Naive thymus-derived CD4-positive, alpha-beta T cell (primary cell): ENCODE measurements at regions of chr20 and their contacts with region 1.

Region 1: DNA sequence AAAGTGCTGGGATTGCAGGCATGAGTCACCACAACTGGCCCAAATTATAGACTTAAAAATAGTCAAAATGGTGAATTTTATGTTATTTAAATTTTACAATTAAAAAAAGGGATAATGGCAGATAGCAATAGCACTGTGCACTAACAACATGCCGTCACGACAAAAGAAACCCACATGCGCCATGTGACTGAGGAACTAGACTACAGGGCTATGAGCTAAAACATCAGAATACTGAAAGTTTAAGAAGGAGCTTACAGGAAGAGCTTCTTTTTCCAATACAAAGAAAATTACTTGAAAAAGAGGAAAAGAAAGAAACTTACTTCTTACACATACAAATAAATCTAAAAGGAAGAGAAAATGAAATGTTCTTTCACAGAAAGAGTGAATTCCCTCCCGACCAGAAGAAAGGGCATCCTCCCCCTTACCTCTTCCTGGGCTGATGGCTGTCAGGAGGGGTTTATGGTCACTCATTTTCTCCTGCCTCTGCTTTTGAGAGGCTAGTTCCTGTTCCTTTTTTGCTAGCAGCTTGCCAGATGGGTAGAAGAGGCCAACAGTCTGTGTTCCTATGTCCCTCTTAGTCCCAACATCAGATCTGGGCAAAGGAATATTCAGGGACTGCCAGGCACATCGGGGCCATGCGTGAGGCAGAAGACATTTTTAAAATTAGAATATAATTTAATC is 54.5 kb downstream of the DZANK1 start:
- DNase-seq: no peak
- ATAC-seq: peak; percentile 33
- H3K4me3 ChIP-seq: no peak overlapping the region
- H3K4me3 Mint-ChIP-seq: no peak overlapping the region
- H3K27ac ChIP-seq: no peak overlapping the region
- H3K27ac Mint-ChIP-seq: no peak overlapping the region
- H3K4me1 ChIP-seq: no peaks in the 10 kb centered on the region
- H3K4me1 Mint-ChIP-seq: peaks cover 0 to 7% (median 3%) of the 10 kb centered on the region in 7 donors
- H3K27me3 ChIP-seq: no peaks in the 10 kb centered on the region
- H3K27me3 Mint-ChIP-seq: no peaks in the 10 kb centered on the region

Region 2: DNA sequence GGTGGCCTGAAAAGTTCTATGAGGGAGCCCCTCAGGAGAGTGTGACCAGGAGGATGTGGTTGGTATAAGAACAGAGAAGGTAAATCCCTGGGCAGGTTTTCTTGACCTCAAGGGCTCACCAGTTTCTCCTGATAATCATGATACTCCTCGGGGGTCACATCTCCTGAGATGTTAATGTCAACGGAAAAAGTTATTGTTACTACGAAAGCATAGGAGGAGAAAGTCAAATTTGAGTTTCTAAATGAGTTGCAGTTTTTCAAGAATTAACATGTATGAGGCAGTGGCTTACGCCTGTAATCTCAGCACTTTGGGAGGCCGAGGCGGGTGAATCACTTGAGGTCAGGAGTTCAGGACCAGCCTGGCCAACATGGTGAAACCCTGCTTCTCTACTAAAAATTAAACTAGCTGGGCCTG is 420.1 kb before region 1 on chr20:
- CTCF ChIA-PET with region 1: no interaction called
- POLR2A ChIA-PET with region 1: no interaction called
- intact Hi-C with region 1: no loop called
- DNase-seq: peak in 1 of 9 donors; percentile 53
- ATAC-seq: no peak
- H3K4me3 ChIP-seq: no peak overlapping the region
- H3K4me3 Mint-ChIP-seq: peak overlapping the region in 1 of 10 donors; percentile 82
- H3K27ac ChIP-seq: no peak overlapping the region
- H3K27ac Mint-ChIP-seq: peak overlapping the region in 1 of 9 donors; percentile 93
- H3K4me1 ChIP-seq: peaks cover 5 to 8% of the 10 kb centered on the region in 2 donors
- H3K4me1 Mint-ChIP-seq: peaks cover 4 to 59% (median 23%) of the 10 kb centered on the region in 7 donors
- H3K27me3 ChIP-seq: no peaks in the 10 kb centered on the region
- H3K27me3 Mint-ChIP-seq: peaks cover 0 to 7% (median 0%) of the 10 kb centered on the region in 5 donors

Region 3: DNA sequence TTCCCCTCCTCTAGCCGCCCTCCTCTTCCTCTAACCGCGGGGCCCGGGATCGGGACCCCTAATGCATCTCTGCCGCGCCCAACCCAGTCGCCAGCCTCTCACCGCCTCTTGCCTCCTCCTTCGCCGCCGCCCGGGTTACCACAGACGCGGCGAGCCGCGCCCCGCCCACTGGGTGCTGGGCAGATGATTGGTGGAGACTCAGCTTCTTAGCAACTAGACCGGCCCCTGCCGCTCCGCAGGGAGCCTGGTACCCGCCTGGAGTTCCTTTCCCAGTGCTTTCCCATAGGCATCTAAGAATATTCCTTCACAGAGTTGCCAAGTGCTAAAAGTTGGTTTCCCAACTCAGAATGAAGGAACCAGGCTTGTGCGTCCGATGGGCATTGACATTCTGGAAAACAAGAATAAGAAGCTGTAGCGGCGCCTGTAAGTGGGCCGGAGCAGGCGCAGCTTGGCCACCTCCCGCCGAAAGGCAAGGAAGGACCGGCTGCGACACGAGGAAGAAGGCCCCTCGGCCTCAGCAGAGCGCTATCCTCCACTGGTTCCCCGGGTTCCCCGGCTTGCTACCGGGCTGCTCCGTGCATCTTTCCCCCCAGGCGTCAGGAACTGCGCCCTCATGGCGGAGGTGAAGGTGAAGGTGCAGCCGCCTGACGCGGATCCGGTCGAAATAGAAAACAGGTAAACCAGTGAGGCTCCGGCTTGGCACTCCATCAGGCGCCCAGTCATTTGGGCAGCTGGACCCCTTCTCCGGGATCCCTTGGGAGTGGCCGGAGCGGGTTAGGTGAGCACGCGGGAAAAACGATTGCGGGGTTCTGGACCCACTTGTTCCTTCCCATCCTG is 54.8 kb after region 1 on chr20 and contains the starts of genes DZANK1 and POLR3F:
- CTCF ChIA-PET with region 1: no interaction called
- POLR2A ChIA-PET with region 1: no interaction called
- intact Hi-C with region 1: loop called (anchors 1 to 2 kb)
- DNase-seq: peak; percentile 85 to 93 (median 92)
- ATAC-seq: peak; percentile 97
- H3K4me3 ChIP-seq: peak within 1 kb of the TSS; percentile 93
- H3K4me3 Mint-ChIP-seq: peak within 1 kb of the TSS; percentile 89 to 99 (median 97)
- H3K27ac ChIP-seq: peak within 1 kb of the TSS; percentile 77
- H3K27ac Mint-ChIP-seq: peak within 1 kb of the TSS; percentile 93 to 99 (median 98)
- H3K4me1 ChIP-seq: peaks cover 7 to 14% of the 10 kb centered on the region in 2 donors
- H3K4me1 Mint-ChIP-seq: peaks cover 25 to 44% (median 37%) of the 10 kb centered on the region in 7 donors
- H3K27me3 ChIP-seq: no peaks in the 10 kb centered on the region
- H3K27me3 Mint-ChIP-seq: no peaks in the 10 kb centered on the region
- total RNA-seq, gene DZANK1: 1.2 to 3.5 (median 2.9) TPM
- total RNA-seq, gene POLR3F: 5.0 to 13.5 (median 11.5) TPM

Region 4: GRCh38 chr20:18587665-18588573 is 175.6 kb after region 1 on chr20 and contains the start of gene DTD1:
- CTCF ChIA-PET with region 1: no interaction called
- POLR2A ChIA-PET with region 1: no interaction called
- intact Hi-C with region 1: loop called (anchors 2 to 5 kb)
- DNase-seq: peak; percentile 29 to 93 (median 53)
- ATAC-seq: peak; percentile 92
- H3K4me3 ChIP-seq: peak within 1 kb of the TSS; percentile 68
- H3K4me3 Mint-ChIP-seq: peak within 1 kb of the TSS; percentile 83 to 99 (median 91)
- H3K27ac ChIP-seq: peak within 1 kb of the TSS; percentile 74
- H3K27ac Mint-ChIP-seq: peak within 1 kb of the TSS; percentile 80 to 94 (median 91)
- H3K4me1 ChIP-seq: peaks cover 0 to 4% of the 10 kb centered on the region in 2 donors
- H3K4me1 Mint-ChIP-seq: peaks cover 16 to 39% (median 27%) of the 10 kb centered on the region in 7 donors
- H3K27me3 ChIP-seq: no peaks in the 10 kb centered on the region
- H3K27me3 Mint-ChIP-seq: peaks cover 0 to 11% (median 9%) of the 10 kb centered on the region in 5 donors
- total RNA-seq, gene DTD1: 12.7 to 24.4 (median 16.6) TPM

Region 5: DNA sequence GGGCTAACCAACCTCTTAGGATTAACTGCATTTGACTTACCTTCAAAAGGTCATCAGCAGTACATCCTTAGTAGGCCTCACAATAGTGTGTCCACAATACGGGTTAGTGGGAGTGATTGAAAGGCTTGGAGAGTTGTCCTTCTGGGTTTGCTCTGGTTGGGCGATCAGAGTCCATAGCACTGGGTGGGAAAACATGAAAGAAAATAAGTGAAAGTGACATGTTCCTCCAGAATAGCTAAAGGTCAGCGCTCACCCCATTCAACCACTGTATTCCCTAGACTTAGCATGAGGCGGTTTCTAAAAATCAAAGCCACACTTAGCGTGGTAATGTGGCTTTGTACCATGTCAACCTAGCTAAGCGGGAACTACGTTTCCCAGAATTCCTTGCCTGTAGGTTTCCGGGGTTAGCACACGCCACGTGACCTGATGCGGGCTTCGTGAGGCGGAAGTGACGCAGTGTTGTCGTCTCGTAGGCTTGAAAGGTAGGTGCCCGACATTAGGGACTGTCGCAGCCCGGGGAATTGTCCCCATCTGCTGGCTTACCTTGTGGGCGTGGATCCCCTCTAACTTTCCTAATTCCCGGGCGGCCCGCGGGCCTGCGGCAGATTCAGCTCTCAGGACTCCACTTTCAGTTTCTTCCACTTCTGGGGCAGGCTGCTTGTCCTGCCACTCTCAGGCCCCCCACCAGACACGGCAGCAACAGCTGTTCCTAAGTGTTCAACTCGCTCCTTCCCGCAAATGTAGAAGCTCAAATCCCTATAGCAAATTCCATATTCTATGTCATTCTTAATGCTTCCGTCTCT is 381.5 kb after region 1 on chr20:
- CTCF ChIA-PET with region 1: no interaction called
- POLR2A ChIA-PET with region 1: no interaction called
- intact Hi-C with region 1: loop called (anchors 5 kb)
- DNase-seq: peak; percentile 62 to 94 (median 87)
- ATAC-seq: peak; percentile 99
- H3K4me3 ChIP-seq: peak overlapping the region; percentile 87
- H3K4me3 Mint-ChIP-seq: peak overlapping the region; percentile 85 to 99 (median 96)
- H3K27ac ChIP-seq: peak overlapping the region; percentile 92
- H3K27ac Mint-ChIP-seq: peak overlapping the region; percentile 97 to 100 (median 99)
- H3K4me1 ChIP-seq: peaks cover 8% of the 10 kb centered on the region in 2 donors
- H3K4me1 Mint-ChIP-seq: peaks cover 0 to 24% (median 18%) of the 10 kb centered on the region in 7 donors
- H3K27me3 ChIP-seq: no peaks in the 10 kb centered on the region
- H3K27me3 Mint-ChIP-seq: peaks cover 11 to 26% (median 21%) of the 10 kb centered on the region in 5 donors

Region 6: DNA sequence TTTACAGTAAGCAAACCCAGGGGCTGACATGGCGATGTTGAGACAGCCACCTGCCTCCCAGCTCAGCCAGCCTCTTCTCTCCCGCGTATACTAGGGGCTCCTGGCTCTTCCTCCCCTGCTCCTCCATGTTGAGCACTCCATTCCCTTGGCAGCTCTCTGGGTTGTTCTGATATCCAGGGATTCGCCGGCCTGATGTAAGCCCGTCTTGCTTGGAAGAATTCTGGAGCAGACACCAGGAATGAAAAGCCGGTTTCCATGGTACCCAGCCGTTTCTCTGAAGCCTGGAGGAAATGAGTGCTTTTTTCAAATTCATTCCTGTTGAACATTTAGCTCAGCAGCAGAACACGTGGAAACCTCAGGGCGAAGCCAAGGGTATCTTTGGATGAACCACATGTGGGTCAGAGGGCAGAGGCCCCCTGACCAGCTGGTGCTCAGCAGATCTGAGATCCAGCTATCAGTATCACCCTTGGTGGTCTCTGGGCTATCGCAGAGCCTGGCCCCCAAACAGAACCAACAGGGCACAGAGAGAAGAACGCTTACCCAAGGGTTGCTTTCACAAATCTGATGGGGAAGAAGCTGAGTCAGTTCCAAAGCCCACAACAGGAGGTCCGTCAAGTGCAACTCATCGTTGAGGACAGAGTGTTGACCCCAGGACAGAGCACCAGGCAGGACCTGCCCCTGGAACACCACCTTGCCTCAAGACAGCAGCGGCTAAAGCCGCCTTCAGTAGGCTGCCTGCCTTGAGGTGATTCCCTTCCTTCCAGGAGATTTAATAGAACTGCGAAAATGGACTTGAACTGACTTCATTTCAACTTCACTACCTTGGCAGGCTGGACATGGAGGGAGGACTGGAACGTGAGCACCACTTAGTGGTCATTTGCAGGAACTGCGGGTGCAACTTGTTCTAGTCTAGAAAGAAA is 1249.6 kb after region 1 on chr20:
- CTCF ChIA-PET with region 1: no interaction called
- POLR2A ChIA-PET with region 1: no interaction called
- intact Hi-C with region 1: loop called in 1 of 2 experiments (anchors 5 kb)
- DNase-seq: peak in 7 of 9 donors; percentile 2 to 38 (median 29)
- ATAC-seq: peak; percentile 71
- H3K4me3 ChIP-seq: no peak overlapping the region
- H3K4me3 Mint-ChIP-seq: no peak overlapping the region
- H3K27ac ChIP-seq: no peak overlapping the region
- H3K27ac Mint-ChIP-seq: no peak overlapping the region
- H3K4me1 ChIP-seq: no peaks in the 10 kb centered on the region
- H3K4me1 Mint-ChIP-seq: peaks cover 0 to 5% (median 0%) of the 10 kb centered on the region in 7 donors
- H3K27me3 ChIP-seq: no peaks in the 10 kb centered on the region
- H3K27me3 Mint-ChIP-seq: peaks cover 5 to 52% (median 25%) of the 10 kb centered on the region in 5 donors